Mucosa of descending colon (tissue), 3 donors: ENCODE measurements at regions of chr18 and their contacts with region 1.

Region 1: GRCh38 chr18:71388148-71388547 is 1099.3 kb downstream of the SOCS6 start:
- DNase-seq: no peak
- ATAC-seq: no peak
- H3K4me3 ChIP-seq: no peak overlapping the region
- H3K4me1 ChIP-seq: no peaks in the 10 kb centered on the region
- CTCF ChIP-seq: no peak

Region 2: DNA sequence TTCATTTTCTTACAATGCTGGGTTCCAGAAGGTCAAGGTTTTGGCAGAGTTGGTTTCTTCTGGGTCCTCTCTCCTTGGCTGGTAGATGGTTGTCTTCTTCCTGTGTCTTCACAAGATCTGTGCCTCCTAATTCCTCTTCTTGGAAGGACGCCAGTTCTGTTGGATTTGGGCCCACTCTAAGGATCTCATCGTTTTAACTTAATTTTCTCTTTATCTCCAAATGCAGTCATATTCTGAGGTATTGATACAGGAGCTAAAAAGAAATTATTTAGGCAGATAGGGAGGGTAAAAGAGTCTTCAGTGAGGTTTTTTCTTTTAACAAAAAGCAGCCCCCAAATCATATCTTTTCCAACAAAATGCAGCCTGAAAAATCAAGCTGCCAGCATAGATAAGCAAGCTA is 100.9 kb before region 1 on chr18:
- intact Hi-C with region 1: no loop called
- DNase-seq: no peak
- ATAC-seq: no peak
- H3K4me3 ChIP-seq: no peak overlapping the region
- H3K4me1 ChIP-seq: no peaks in the 10 kb centered on the region
- CTCF ChIP-seq: no peak

Region 3: GRCh38 chr18:71327850-71328249 is 60.3 kb before region 1 on chr18:
- intact Hi-C with region 1: loop called in 1 of 2 experiments (anchors 10 kb)
- DNase-seq: peak in 1 of 3 donors; percentile 3
- ATAC-seq: peak; percentile 38
- H3K4me3 ChIP-seq: no peak overlapping the region
- H3K4me1 ChIP-seq: no peaks in the 10 kb centered on the region
- CTCF ChIP-seq: no peak

Region 4: DNA sequence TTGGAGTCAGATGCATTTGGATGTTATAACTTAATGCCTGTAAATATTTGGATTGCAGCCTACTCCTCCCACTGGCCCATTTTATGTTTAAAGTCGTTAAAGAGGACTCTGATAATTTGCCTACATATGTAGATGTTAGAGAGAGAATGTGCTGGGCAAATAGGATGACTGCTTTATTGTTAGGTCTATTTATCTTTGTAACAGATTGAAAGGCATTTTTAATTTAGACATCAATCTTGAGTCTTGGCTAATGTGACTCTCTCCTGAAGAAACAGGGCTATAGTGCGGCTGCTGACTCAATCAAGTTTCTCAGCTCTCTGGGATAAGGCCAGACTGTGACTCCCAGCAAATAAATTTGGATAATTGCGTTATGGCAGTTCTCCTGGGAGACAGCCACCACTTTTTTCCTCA is 54.6 kb after region 1 on chr18:
- intact Hi-C with region 1: no loop called
- DNase-seq: no peak
- ATAC-seq: no peak
- H3K4me3 ChIP-seq: no peak overlapping the region
- H3K4me1 ChIP-seq: no peaks in the 10 kb centered on the region
- CTCF ChIP-seq: no peak